Activated T-helper 1 cell treated with anti-CD3 and anti-CD28 coated beads, Interleukin-12 subunit alpha, Interleukin-12 subunit beta, Interleukin-2, Interleukin-4 antibody, amounts not matched to agents 30 ng/mL and 10 ng/mL and 1 ng/mL, durations not matched to agents 14 hours and 24 hours and 36 hours (primary cell): ENCODE measurements at regions of chr3 and their contacts with region 1.

Region 1: GRCh38 chr3:189304446-189305351 is 132.9 kb downstream of the TPRG1 start:
- DNase-seq: no peak
- H3K4me3 Mint-ChIP-seq: peak overlapping the region; percentile 57
- H3K27ac Mint-ChIP-seq: peak overlapping the region; percentile 91
- H3K4me1 Mint-ChIP-seq: peaks cover 64% of the 10 kb centered on the region
- H3K27me3 Mint-ChIP-seq: no peaks in the 10 kb centered on the region

Region 2: DNA sequence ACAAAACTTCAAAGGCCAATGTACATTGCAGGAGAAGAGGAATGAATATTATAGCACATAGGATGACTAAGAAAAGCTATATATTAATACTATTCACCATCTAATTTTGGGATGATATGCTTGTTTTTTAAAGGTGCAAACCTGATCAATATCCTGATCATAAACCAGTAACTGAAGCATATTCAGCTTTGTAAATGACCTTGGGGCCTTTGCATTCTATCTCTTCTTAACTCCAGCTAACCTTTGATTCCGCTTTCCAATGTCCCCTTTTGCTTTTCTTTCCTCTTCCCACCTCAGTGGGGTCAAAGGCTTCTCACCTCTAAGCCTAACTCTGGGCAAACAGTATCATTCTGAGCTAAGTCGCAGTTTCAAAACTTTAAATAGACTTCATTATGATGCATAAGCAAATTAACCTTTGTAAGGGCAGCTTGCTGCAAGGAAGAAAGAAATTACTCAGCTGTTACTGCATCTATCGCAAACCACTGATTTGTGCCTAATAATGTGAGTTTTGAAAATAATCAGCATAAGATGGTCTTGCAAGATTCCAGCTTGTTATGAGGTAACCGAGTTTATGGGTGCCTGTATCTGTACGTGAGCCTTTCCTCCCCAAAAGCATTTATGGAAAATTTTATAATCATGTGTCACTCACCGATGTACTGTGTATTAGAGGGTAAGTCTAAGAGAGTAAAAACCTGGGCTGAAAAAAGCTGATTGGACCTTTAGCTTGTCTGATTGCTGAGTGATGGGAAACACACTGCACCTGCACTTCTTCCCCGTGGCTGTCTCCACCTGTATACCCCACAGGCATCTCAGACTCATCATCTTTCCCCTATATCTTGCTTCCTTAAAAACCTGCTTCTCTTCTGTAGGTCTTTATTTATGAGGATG is 16.1 kb before region 1 on chr3:
- intact Hi-C with region 1: loop called (anchors 1 kb)
- DNase-seq: no peak
- H3K4me3 Mint-ChIP-seq: no peak overlapping the region
- H3K27ac Mint-ChIP-seq: peak overlapping the region; percentile 59
- H3K4me1 Mint-ChIP-seq: peaks cover 40% of the 10 kb centered on the region
- H3K27me3 Mint-ChIP-seq: no peaks in the 10 kb centered on the region

Region 3: GRCh38 chr3:189394599-189395121 is 90.0 kb after region 1 on chr3:
- intact Hi-C with region 1: loop called (anchors 1 kb)
- DNase-seq: no peak
- H3K4me3 Mint-ChIP-seq: peak overlapping the region; percentile 20
- H3K27ac Mint-ChIP-seq: peak overlapping the region; percentile 76
- H3K4me1 Mint-ChIP-seq: peaks cover 34% of the 10 kb centered on the region
- H3K27me3 Mint-ChIP-seq: no peaks in the 10 kb centered on the region

Region 4: DNA sequence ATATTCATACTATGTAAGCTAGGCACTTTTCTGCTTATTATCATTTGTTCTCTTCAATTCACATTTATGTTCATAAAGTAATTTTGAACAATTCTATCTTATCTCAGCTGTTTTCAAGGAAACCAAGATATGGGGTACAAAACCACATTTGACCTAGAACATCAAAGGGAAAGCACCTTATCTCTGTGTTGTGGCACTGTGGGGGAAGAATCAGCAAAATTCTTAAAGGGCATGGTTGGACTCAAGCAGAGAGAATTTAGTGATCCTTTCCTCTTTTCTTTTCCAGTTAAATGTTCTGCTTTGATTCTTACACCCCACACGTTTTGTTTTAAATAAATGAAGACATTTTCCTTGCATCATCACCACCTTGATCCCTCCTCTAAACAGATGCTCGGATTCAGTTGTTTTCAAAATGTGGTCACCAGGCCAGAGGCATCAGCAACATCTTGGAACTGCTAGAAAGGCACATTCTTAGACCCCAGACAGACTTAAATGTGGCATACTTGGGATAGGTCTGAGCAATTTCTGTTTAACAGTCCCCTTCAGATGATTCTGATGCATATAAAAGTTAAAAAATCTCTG is 198.1 kb after region 1 on chr3:
- intact Hi-C with region 1: loop called (anchors 5 kb)
- DNase-seq: no peak
- H3K4me3 Mint-ChIP-seq: no peak overlapping the region
- H3K27ac Mint-ChIP-seq: no peak overlapping the region
- H3K4me1 Mint-ChIP-seq: peaks cover 12% of the 10 kb centered on the region
- H3K27me3 Mint-ChIP-seq: no peaks in the 10 kb centered on the region

Region 5: GRCh38 chr3:190617185-190617584 is 1312.5 kb after region 1 on chr3:
- intact Hi-C with region 1: loop called (anchors 5 kb)
- DNase-seq: peak; percentile 58
- H3K4me3 Mint-ChIP-seq: peak overlapping the region; percentile 61
- H3K27ac Mint-ChIP-seq: peak overlapping the region; percentile 97
- H3K4me1 Mint-ChIP-seq: peaks cover 91% of the 10 kb centered on the region
- H3K27me3 Mint-ChIP-seq: no peaks in the 10 kb centered on the region